Activated CD8-positive, alpha-beta T cell treated with anti-CD3 and anti-CD28 coated beads, Interleukin-2, amount 10 ng/mL, durations not matched to agents 7 days and 5 days (primary cell): ENCODE measurements at regions of chr3 and their contacts with region 1.

Region 1: GRCh38 chr3:161274719-161275298 is 53.7 kb downstream of the NMD3 start:
- DNase-seq: peak; percentile 68
- ATAC-seq: peak; percentile 53
- H3K4me3 Mint-ChIP-seq: no peak overlapping the region
- H3K27ac Mint-ChIP-seq: no peak overlapping the region
- H3K4me1 Mint-ChIP-seq: peaks cover 11% of the 10 kb centered on the region
- H3K27me3 Mint-ChIP-seq: no peaks in the 10 kb centered on the region

Region 2: DNA sequence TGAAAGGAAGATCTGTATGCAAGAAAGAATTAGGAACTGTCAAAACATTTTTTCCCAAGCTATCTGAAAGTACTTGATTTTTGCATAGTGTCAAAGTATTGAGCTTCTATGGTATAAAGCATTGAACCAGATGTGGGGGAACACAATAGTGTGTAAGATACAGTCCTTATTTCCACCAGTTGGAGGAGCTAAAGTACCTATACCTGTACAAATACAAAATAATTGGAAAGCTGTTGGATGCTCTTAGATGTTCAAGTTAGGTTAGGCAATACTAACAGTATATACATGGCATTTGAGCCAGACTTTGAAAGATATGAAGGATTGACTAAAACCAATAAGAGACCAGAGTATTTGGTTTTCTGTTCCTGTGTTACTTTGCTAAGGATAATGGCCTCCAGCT is 318.0 kb before region 1 on chr3:
- CTCF ChIA-PET with region 1: interaction called, 20 read pairs
- POLR2A ChIA-PET with region 1: no interaction called
- DNase-seq: no peak
- ATAC-seq: peak; percentile 60
- H3K4me3 Mint-ChIP-seq: no peak overlapping the region
- H3K27ac Mint-ChIP-seq: no peak overlapping the region
- H3K4me1 Mint-ChIP-seq: no peaks in the 10 kb centered on the region
- H3K27me3 Mint-ChIP-seq: peaks cover 14% of the 10 kb centered on the region

Region 3: GRCh38 chr3:161284989-161285388 is 10.2 kb after region 1 on chr3:
- CTCF ChIA-PET with region 1: interaction called, 12 read pairs
- POLR2A ChIA-PET with region 1: no interaction called
- DNase-seq: no peak
- ATAC-seq: no peak
- H3K4me3 Mint-ChIP-seq: no peak overlapping the region
- H3K27ac Mint-ChIP-seq: no peak overlapping the region
- H3K4me1 Mint-ChIP-seq: no peaks in the 10 kb centered on the region
- H3K27me3 Mint-ChIP-seq: peaks cover 12% of the 10 kb centered on the region

Region 4: DNA sequence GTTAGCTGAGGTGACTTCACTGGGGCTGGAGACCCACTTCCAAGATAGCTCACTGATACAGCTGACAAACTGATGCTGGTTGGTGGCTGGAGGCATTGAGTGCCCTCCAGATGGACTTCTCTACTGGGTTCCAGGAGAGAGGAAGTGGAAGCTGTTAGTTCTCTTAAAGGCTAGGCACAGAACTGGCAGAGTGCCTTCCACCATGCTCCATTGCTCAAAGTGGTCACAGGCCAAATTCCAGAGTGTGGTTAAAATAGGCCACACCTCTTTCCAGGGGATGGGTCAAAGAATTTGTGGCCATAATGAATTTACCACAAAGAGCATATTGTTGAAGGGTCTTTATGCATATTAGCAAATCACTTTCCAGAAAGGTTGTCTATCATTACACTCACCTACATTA is 20.5 kb after region 1 on chr3:
- CTCF ChIA-PET with region 1: interaction called, 32 read pairs
- POLR2A ChIA-PET with region 1: no interaction called
- DNase-seq: no peak
- ATAC-seq: no peak
- H3K4me3 Mint-ChIP-seq: no peak overlapping the region
- H3K27ac Mint-ChIP-seq: no peak overlapping the region
- H3K4me1 Mint-ChIP-seq: no peaks in the 10 kb centered on the region
- H3K27me3 Mint-ChIP-seq: peaks cover 20% of the 10 kb centered on the region

Region 5: GRCh38 chr3:161409069-161409468 is 134.3 kb after region 1 on chr3:
- CTCF ChIA-PET with region 1: interaction called, 55 read pairs
- POLR2A ChIA-PET with region 1: no interaction called
- DNase-seq: peak; percentile 66
- ATAC-seq: no peak
- H3K4me3 Mint-ChIP-seq: no peak overlapping the region
- H3K27ac Mint-ChIP-seq: no peak overlapping the region
- H3K4me1 Mint-ChIP-seq: peaks cover 25% of the 10 kb centered on the region
- H3K27me3 Mint-ChIP-seq: peaks cover 53% of the 10 kb centered on the region

Region 6: GRCh38 chr3:161423911-161424522 is 149.2 kb after region 1 on chr3:
- CTCF ChIA-PET with region 1: interaction called, 24 read pairs
- POLR2A ChIA-PET with region 1: no interaction called
- DNase-seq: no peak
- ATAC-seq: no peak
- H3K4me3 Mint-ChIP-seq: no peak overlapping the region
- H3K27ac Mint-ChIP-seq: no peak overlapping the region
- H3K4me1 Mint-ChIP-seq: peaks cover 4% of the 10 kb centered on the region
- H3K27me3 Mint-ChIP-seq: peaks cover 21% of the 10 kb centered on the region

Region 7: GRCh38 chr3:161731968-161732367 is 457.2 kb after region 1 on chr3:
- CTCF ChIA-PET with region 1: no interaction called
- POLR2A ChIA-PET with region 1: no interaction called
- DNase-seq: no peak
- ATAC-seq: no peak
- H3K4me3 Mint-ChIP-seq: no peak overlapping the region
- H3K27ac Mint-ChIP-seq: no peak overlapping the region
- H3K4me1 Mint-ChIP-seq: no peaks in the 10 kb centered on the region
- H3K27me3 Mint-ChIP-seq: no peaks in the 10 kb centered on the region

Region 8: GRCh38 chr3:161754420-161755053 is 479.7 kb after region 1 on chr3:
- CTCF ChIA-PET with region 1: no interaction called
- POLR2A ChIA-PET with region 1: no interaction called
- DNase-seq: no peak
- ATAC-seq: no peak
- H3K4me3 Mint-ChIP-seq: no peak overlapping the region
- H3K27ac Mint-ChIP-seq: no peak overlapping the region
- H3K4me1 Mint-ChIP-seq: no peaks in the 10 kb centered on the region
- H3K27me3 Mint-ChIP-seq: no peaks in the 10 kb centered on the region